ENCODE measurements at regions of chr9 and their contacts with region 1.

Region 1: GRCh38 chr9:131334629-131335367 is 45.3 kb downstream of the PLPP7 start:
- DNase-seq: peak; percentile 48
- H3K4me3 ChIP-seq: no peak overlapping the region
- H3K27ac ChIP-seq: no peak overlapping the region
- H3K4me1 ChIP-seq: peaks cover 12% of the 10 kb centered on the region
- H3K27me3 ChIP-seq: no peaks in the 10 kb centered on the region
- CTCF ChIP-seq: no peak
- POLR2A ChIP-seq: no peak

Region 2: DNA sequence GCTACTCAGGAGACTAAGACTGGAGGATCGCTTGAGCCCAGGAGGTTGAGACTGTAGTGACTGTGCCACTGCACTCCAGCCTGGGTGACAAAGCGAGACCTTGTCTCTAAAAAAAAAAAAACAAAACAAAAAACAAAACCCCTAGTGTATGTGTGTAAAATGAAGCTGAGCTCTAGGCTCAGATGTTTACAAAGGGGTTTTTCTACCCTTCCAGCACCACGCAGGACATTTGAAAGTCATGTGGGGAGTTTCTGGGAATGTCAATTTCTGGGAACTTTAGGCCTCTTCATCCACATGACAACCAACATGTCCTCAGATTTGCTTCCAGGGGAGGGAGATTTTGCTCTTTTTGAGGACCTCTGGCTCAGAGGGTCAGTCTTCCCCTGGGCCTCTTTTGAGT is 280.9 kb before region 1 on chr9:
- CTCF ChIA-PET with region 1: interaction called, 52 read pairs
- POLR2A ChIA-PET with region 1: no interaction called
- dilution Hi-C with region 1: no loop called
- intact Hi-C with region 1: loop called (anchors 1 kb)
- DNase-seq: no peak
- H3K4me3 ChIP-seq: no peak overlapping the region
- H3K27ac ChIP-seq: no peak overlapping the region
- H3K4me1 ChIP-seq: no peaks in the 10 kb centered on the region
- H3K27me3 ChIP-seq: no peaks in the 10 kb centered on the region
- CTCF ChIP-seq: no peak
- POLR2A ChIP-seq: no peak

Region 3: DNA sequence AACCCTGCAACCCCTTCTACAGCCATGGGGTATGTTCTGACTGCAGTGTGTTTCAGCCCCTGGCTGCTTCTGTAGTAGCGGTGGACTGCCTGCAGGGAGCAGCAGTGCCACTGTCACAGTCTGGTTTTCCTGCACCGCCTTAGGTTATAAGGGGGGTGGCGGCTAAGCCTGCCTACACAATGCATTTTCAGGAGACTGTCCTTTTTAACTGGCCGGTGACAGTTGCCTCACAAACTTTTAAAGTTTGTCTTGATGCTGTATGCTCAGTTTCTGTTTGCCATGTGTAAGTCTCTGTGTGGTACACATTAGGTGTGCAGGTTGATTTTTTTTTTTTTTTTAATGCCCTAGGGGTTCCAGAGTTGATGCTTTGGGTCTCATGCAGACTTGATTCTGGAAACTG is 156.4 kb before region 1 on chr9:
- CTCF ChIA-PET with region 1: interaction called, 280 read pairs
- POLR2A ChIA-PET with region 1: interaction called, 3 read pairs
- dilution Hi-C with region 1: no loop called
- intact Hi-C with region 1: loop called (anchors 1 kb)
- DNase-seq: peak; percentile 87
- H3K4me3 ChIP-seq: no peak overlapping the region
- H3K27ac ChIP-seq: no peak overlapping the region
- H3K4me1 ChIP-seq: no peaks in the 10 kb centered on the region
- H3K27me3 ChIP-seq: no peaks in the 10 kb centered on the region
- CTCF ChIP-seq: peak; percentile 89 to 94
- POLR2A ChIP-seq: no peak

Region 4: GRCh38 chr9:131214286-131214856 is 120.4 kb before region 1 on chr9:
- CTCF ChIA-PET with region 1: interaction called, 20 read pairs
- POLR2A ChIA-PET with region 1: interaction called, 6 read pairs
- dilution Hi-C with region 1: no loop called
- intact Hi-C with region 1: no loop called
- DNase-seq: no peak
- H3K4me3 ChIP-seq: peak overlapping the region in 1 of 3 experiments; percentile 11
- H3K27ac ChIP-seq: peak overlapping the region; percentile 65
- H3K4me1 ChIP-seq: peaks cover 38% of the 10 kb centered on the region
- H3K27me3 ChIP-seq: no peaks in the 10 kb centered on the region
- CTCF ChIP-seq: no peak
- POLR2A ChIP-seq: peak; percentile 21

Region 5: DNA sequence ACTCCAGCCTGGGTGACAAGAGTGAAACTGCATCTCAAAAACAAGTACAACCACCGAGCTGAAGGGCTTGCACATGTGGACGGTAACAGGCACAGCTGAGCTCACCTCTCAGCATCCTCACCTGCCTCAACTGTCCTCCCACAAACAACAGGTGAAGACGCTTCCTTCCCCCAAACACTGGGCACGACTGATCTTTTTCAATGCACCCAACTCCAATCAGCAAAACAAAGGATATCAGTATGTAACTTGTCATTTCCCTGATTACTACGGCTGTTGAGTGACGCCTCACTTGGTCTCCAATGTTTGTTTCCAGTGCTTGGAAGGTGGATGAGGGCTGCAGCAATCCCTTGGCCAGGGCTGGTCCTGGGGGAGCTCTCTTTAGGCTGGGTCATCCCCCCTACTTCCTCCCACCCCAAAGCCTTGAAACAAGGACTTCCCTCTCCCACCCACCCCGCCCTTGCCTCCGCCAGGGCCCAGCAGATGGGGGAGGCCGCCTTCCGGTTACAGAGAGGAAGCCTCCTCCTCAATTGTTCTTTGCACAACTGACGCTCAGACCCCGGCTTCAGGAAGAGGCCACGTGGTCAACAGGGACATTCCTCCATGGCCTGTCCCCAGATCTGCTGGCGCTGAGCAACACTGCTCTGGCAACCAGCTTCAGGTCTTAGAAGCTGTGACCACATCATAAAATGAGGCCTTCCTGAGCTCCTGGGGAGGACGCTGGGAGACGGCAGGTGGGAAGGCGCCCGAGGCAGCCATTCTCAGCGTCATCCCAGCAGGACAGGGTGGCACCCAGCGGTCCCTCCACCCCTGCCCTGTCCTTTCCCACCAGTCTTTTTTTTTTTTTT is 64.4 kb before region 1 on chr9:
- CTCF ChIA-PET with region 1: interaction called, 42 read pairs
- POLR2A ChIA-PET with region 1: interaction called, 3 read pairs
- dilution Hi-C with region 1: no loop called
- intact Hi-C with region 1: loop called (anchors 1 kb)
- DNase-seq: peak; percentile 73
- H3K4me3 ChIP-seq: no peak overlapping the region
- H3K27ac ChIP-seq: peak overlapping the region; percentile 67
- H3K4me1 ChIP-seq: peaks cover 54% of the 10 kb centered on the region
- H3K27me3 ChIP-seq: no peaks in the 10 kb centered on the region
- CTCF ChIP-seq: no peak
- POLR2A ChIP-seq: no peak